Psoas muscle (tissue), 8 donors: ENCODE measurements at regions of chr13 and their contacts with region 1.

Region 1: GRCh38 chr13:27533155-27533643 is 82.8 kb upstream of the MTIF3 start:
- DNase-seq: peak; percentile 84 to 90
- ATAC-seq: peak; percentile 90 to 99 (median 98)
- H3K4me3 ChIP-seq: no peak overlapping the region
- H3K27ac ChIP-seq: no peak overlapping the region
- H3K4me1 ChIP-seq: peaks cover 2% of the 10 kb centered on the region
- H3K27me3 ChIP-seq: no peaks in the 10 kb centered on the region
- CTCF ChIP-seq: peak; percentile 90

Region 2: DNA sequence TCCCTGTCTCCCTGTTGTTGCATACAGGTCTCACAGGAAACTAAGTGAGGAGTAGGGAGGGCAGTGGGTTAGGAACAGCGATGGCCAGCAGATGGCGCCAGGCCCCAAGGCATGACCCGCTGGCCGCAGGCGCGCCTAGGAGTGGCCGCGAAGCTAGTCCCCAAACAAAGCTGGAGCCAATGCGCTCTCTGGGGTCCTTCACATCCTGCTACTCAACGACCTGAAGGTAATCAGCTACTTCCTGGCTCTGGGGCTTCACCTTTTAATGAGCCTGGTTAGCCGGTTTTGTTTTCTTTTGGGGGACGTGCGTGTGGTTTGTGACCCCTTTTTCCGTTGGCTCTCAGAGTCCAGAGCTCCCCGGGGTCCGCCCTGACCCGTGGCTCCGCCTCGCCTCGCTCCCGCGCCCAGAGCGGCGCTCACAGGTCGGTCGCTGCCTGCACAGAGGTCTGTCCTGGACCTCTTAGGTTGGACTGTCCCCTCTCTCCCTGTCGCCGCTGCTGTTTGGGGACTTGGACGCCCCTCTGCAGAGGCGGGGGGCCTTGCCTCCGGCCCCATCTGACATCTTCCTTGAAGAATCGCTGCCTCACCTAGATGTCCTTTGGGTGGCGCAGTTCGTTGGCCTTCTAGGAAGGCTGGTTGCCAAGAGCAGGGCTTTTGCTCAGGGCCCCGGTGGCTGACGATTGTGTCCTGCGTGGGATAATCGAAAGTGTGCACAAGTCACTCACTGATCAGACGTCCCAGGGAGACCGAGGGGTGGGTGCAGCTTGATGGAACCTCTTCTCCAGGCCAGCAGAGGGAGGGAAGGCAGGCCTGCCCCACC is 170.9 kb before region 1 on chr13:
- intact Hi-C with region 1: loop called in 1 of 2 experiments (anchors 10 kb)
- DNase-seq: peak; percentile 84 to 91
- ATAC-seq: peak; percentile 96 to 99 (median 96)
- H3K4me3 ChIP-seq: peak overlapping the region; percentile 60
- H3K27ac ChIP-seq: no peak overlapping the region
- H3K4me1 ChIP-seq: no peaks in the 10 kb centered on the region
- H3K27me3 ChIP-seq: peaks cover 0 to 18% (median 0%) of the 10 kb centered on the region in 3 donors
- CTCF ChIP-seq: peak; percentile 93

Region 3: GRCh38 chr13:27374650-27375049 is 158.5 kb before region 1 on chr13:
- intact Hi-C with region 1: loop called (anchors 10 kb)
- DNase-seq: peak; percentile 31 to 62
- ATAC-seq: peak; percentile 93 to 99 (median 96)
- H3K4me3 ChIP-seq: no peak overlapping the region
- H3K27ac ChIP-seq: no peak overlapping the region
- H3K4me1 ChIP-seq: no peaks in the 10 kb centered on the region
- H3K27me3 ChIP-seq: peaks cover 0 to 13% (median 2%) of the 10 kb centered on the region in 3 donors
- CTCF ChIP-seq: peak; percentile 78

Region 4: DNA sequence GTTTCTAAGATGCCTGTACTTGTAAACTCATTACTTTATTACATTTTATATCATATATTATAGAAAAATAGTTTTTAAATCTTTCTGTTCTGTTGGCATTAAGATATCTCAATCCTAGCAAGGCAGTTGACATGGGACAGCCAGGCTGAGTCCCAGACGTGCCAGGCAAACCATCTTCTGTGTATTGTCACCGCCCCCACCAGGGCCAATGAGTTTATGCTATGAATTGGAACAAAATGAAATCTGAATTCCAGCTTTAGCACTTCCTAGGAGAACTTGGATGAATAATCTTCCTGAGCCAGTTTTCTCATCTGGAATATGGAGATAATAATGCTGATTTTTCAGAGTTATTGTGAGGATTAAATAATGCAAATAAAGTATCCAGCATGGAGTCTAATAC is 179.2 kb after region 1 on chr13:
- intact Hi-C with region 1: loop called in 1 of 2 experiments (anchors 5 kb)
- DNase-seq: no peak
- ATAC-seq: peak in 2 of 4 donors; percentile 47 to 73
- H3K4me3 ChIP-seq: no peak overlapping the region
- H3K27ac ChIP-seq: no peak overlapping the region
- H3K4me1 ChIP-seq: no peaks in the 10 kb centered on the region
- H3K27me3 ChIP-seq: peaks cover 0 to 18% (median 0%) of the 10 kb centered on the region in 3 donors
- CTCF ChIP-seq: peak; percentile 34

Region 5: DNA sequence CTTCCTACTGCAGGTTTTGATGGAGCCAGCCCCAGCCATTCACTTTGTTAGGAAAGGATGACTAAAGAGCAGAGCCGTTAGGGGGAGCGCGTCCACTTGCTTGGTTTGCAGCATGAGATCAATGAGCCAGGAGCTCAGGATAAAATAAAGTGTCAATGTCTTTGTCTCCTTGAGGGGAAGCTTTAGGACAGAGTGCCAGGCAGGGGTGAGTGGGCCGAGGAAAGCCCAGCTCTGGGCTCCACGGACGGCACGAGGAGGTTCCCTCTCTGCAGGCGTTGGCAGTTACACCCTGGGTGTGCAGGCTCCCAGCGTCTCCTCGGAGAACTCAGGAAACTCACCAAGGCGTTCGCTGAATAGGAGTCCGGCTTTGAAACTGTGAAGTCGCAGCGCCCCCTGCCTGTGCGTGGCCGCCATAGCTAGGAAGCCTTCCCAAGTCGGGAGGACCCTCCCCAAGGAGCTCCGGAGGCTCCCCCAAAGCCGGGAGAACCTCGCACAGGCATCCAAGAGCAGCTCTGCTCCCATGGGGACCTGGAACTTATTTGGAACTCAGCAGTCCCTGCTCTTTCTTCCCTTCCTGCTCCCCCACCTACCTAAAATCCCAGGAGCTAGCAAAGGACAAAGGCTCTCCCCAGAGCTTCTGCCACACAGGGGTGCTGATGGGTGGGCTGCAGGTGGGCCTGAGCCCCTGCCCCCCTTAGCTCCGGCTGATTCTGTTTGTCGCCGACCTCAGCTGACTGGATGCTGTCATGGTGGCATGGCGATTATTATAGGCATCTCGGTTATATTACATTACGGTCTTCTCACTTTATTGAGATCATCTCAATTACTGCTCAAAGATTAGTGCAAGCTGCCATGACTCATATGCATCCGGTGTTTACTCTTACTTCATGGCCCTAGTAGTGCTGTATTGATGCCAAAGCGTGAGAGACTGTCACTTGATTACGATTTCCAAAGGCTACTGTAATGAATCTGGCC is 293.5 kb after region 1 on chr13:
- intact Hi-C with region 1: loop called (anchors 2 to 5 kb)
- DNase-seq: peak; percentile 69 to 81
- ATAC-seq: peak; percentile 86 to 96 (median 92)
- H3K4me3 ChIP-seq: peak overlapping the region; percentile 23
- H3K27ac ChIP-seq: no peak overlapping the region
- H3K4me1 ChIP-seq: peaks cover 5% of the 10 kb centered on the region
- H3K27me3 ChIP-seq: peaks cover 1 to 42% (median 5%) of the 10 kb centered on the region in 3 donors
- CTCF ChIP-seq: peak; percentile 93

Region 6: GRCh38 chr13:27980280-27980998 is 447.2 kb after region 1 on chr13:
- intact Hi-C with region 1: loop called in 1 of 2 experiments (anchors 10 kb)
- DNase-seq: no peak
- ATAC-seq: no peak
- H3K4me3 ChIP-seq: no peak overlapping the region
- H3K27ac ChIP-seq: no peak overlapping the region
- H3K4me1 ChIP-seq: no peaks in the 10 kb centered on the region
- H3K27me3 ChIP-seq: peaks cover 2 to 84% (median 43%) of the 10 kb centered on the region in 3 donors
- CTCF ChIP-seq: no peak